Activated B cell treated with CpG ODN at 0.5 μM for 24 hours (primary cell): ENCODE measurements at regions of chr1 and their contacts with region 1.

Region 1: GRCh38 chr1:77825131-77825709 is 45.8 kb downstream of the MIGA1 start:
- DNase-seq: no peak
- ATAC-seq: peak; percentile 62
- H3K4me3 Mint-ChIP-seq: no peak overlapping the region
- H3K27ac Mint-ChIP-seq: no peak overlapping the region
- H3K4me1 Mint-ChIP-seq: peaks cover 5% of the 10 kb centered on the region
- H3K27me3 Mint-ChIP-seq: no peaks in the 10 kb centered on the region
- CTCF ChIP-seq: no peak

Region 2: DNA sequence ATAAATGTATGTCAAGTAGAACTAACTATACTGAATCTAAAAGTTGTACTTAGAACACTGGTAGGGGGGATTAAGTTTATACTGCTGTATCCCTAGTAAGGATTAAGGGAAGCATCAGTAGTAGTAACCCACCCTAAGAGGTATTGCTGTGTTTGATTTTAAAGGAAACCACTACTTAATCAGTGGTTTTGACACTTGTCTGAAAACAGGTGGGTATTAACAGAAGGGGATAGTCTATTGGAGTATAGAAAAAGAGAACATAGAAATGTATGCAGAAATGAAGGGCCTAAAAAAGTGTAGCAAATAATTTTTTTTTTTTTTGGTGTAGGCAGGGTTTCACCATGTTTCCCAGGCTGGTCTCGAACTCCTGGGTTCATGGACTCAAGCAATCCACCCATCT is 43.5 kb before region 1 on chr1:
- CTCF ChIA-PET with region 1: no interaction called
- POLR2A ChIA-PET with region 1: no interaction called
- intact Hi-C with region 1: no loop called
- DNase-seq: no peak
- ATAC-seq: no peak
- H3K4me3 Mint-ChIP-seq: no peak overlapping the region
- H3K27ac Mint-ChIP-seq: no peak overlapping the region
- H3K4me1 Mint-ChIP-seq: peaks cover 28% of the 10 kb centered on the region
- H3K27me3 Mint-ChIP-seq: no peaks in the 10 kb centered on the region
- CTCF ChIP-seq: no peak

Region 3: GRCh38 chr1:77847621-77848080 is 22.4 kb after region 1 on chr1:
- CTCF ChIA-PET with region 1: no interaction called
- POLR2A ChIA-PET with region 1: no interaction called
- intact Hi-C with region 1: loop called (anchors 2 kb)
- DNase-seq: no peak
- ATAC-seq: no peak
- H3K4me3 Mint-ChIP-seq: no peak overlapping the region
- H3K27ac Mint-ChIP-seq: no peak overlapping the region
- H3K4me1 Mint-ChIP-seq: peaks cover 2% of the 10 kb centered on the region
- H3K27me3 Mint-ChIP-seq: no peaks in the 10 kb centered on the region
- CTCF ChIP-seq: no peak

Region 4: GRCh38 chr1:78038491-78038939 is 213.3 kb after region 1 on chr1:
- CTCF ChIA-PET with region 1: no interaction called
- POLR2A ChIA-PET with region 1: no interaction called
- intact Hi-C with region 1: no loop called
- DNase-seq: no peak
- ATAC-seq: no peak
- H3K4me3 Mint-ChIP-seq: no peak overlapping the region
- H3K27ac Mint-ChIP-seq: no peak overlapping the region
- H3K4me1 Mint-ChIP-seq: peaks cover 6% of the 10 kb centered on the region
- H3K27me3 Mint-ChIP-seq: no peaks in the 10 kb centered on the region
- CTCF ChIP-seq: no peak